A673 (cell line): ENCODE measurements at regions of chr7 and their contacts with region 1.

Region 1: GRCh38 chr7:95330204-95330960 is 6.0 kb upstream of the PON1 start:
- DNase-seq: peak; percentile 7
- H3K4me3 ChIP-seq: no peak overlapping the region
- H3K27ac ChIP-seq: no peak overlapping the region
- H3K4me1 ChIP-seq: no peaks in the 10 kb centered on the region
- H3K27me3 ChIP-seq: no peaks in the 10 kb centered on the region
- CTCF ChIP-seq: no peak

Region 2: DNA sequence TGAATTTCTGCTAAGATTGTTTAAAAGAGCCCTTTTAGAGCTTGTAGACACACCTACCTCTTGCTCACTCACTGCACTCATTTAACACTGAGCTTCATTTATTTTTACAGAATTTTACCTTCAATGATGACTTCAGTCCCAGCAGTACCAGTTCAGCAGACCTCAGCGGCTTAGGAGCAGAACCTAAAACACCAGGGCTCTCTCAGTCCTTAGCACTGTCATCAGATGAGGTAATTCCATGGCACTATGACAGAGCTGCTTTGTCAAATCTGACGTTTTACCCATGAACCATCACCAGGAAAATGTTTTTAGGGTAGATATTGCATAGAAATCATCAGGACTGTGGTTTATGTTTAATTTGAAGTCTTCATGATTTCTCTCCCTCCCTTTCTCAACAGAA is 44.3 kb before region 1 on chr7:
- CTCF ChIA-PET with region 1: no interaction called
- POLR2A ChIA-PET with region 1: no interaction called
- intact Hi-C with region 1: no loop called
- DNase-seq: no peak
- H3K4me3 ChIP-seq: no peak overlapping the region
- H3K27ac ChIP-seq: no peak overlapping the region
- H3K4me1 ChIP-seq: no peaks in the 10 kb centered on the region
- H3K27me3 ChIP-seq: no peaks in the 10 kb centered on the region
- CTCF ChIP-seq: no peak

Region 3: DNA sequence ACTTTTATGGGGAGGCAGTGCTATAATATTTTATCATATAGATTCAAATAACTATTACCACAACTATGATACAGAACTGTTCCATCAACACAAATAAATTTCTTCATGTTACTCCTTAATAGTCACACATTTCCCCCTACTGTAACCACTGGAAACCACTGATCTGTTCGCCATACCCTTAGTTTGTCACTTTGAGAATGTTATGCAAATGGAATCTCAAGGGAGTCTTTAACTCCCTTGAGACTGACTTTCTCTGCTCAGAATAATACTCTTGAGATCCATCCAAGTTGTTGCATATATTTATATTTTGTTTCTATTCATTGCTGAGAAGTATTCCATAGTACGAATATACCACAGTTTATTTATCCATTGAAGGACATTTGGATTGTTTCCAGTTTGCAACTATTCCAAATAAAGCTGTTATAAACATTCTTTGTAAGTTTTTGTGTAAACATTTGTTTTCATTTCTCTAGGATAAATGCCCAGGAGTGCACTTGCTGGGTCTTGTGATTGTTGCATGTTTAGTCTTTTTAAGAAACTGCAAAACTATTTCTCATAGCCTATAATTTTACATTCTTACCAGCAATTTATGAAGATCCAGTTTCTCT is 124.2 kb after region 1 on chr7:
- CTCF ChIA-PET with region 1: no interaction called
- POLR2A ChIA-PET with region 1: interaction called, 11 read pairs
- intact Hi-C with region 1: no loop called
- DNase-seq: peak; percentile 69
- H3K4me3 ChIP-seq: no peak overlapping the region
- H3K27ac ChIP-seq: no peak overlapping the region
- H3K4me1 ChIP-seq: peaks cover 19% of the 10 kb centered on the region
- H3K27me3 ChIP-seq: no peaks in the 10 kb centered on the region
- CTCF ChIP-seq: no peak